Natural killer cell (primary cell): ENCODE measurements at regions of chr6 and their contacts with region 1.

Region 1: DNA sequence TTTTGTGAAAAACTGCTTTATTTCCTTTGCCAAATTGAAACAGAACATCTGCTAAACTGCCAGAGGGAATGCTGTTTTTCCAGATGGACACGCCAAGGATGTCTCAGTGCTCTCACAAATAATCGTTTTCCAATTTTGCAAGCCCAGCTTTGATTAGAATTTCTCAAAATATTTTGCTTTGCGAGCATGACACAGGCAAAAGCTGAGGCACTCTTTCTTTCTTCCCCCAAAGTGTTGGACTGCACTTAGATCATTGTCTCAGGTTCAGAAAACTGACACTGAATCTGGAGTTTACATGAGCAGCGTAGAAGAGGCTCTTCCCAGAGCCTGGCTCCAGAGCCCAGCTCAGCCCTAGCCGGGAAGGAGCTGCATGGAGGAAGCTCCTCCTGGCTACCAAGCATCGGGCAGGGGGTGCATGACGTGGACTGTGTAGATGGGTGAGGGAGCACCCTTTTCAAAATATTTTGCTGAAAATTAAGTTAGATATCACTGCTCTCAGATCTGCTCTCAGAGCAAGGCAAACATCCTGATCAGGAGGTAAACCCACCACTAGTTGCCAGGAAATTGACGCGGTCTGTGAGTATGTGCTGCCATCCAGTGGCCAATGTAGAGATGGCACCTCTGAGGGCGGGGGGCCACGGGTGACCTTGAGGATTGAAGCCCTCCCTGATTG is 107.5 kb downstream of the SLC22A3 start:
- DNase-seq: peak; percentile 66 to 84
- ATAC-seq: peak; percentile 85 to 92 (median 91)
- H3K4me3 ChIP-seq: no peak overlapping the region
- H3K4me3 Mint-ChIP-seq: no peak overlapping the region
- H3K27ac ChIP-seq: peak overlapping the region; percentile 8
- H3K27ac Mint-ChIP-seq: no peak overlapping the region
- H3K4me1 ChIP-seq: peaks cover 48% of the 10 kb centered on the region
- H3K4me1 Mint-ChIP-seq: no peaks in the 10 kb centered on the region
- H3K27me3 ChIP-seq: no peaks in the 10 kb centered on the region
- H3K27me3 Mint-ChIP-seq: no peaks in the 10 kb centered on the region
- CTCF ChIP-seq: peak; percentile 99

Region 2: DNA sequence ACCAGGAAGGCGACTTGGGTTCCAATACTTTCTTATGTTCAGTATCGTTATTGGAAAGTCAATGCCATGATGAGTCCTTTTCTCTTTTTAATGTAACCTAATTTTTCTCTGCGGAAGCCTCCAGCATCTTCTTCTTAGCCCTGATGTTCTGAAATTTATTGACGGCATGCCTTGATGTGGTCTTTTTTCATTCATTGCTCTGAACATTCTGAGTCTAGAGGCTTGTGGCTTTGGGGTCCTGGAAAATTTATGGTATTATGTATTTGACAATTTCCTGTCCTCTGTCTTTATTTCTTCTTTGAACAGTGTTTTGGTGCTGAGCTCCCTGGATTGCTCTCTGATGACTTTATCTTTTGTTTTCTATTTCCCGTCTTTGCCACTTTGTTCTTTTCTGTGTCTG is 593.6 kb before region 1 on chr6:
- intact Hi-C with region 1: loop called (anchors 5 kb)
- DNase-seq: peak in 1 of 2 donors; percentile 57
- ATAC-seq: no peak
- H3K4me3 ChIP-seq: no peak overlapping the region
- H3K4me3 Mint-ChIP-seq: no peak overlapping the region
- H3K27ac ChIP-seq: no peak overlapping the region
- H3K27ac Mint-ChIP-seq: no peak overlapping the region
- H3K4me1 ChIP-seq: no peaks in the 10 kb centered on the region
- H3K4me1 Mint-ChIP-seq: no peaks in the 10 kb centered on the region
- H3K27me3 ChIP-seq: peaks cover 2% of the 10 kb centered on the region
- H3K27me3 Mint-ChIP-seq: peaks cover 23 to 31% of the 10 kb centered on the region in 2 donors
- CTCF ChIP-seq: no peak

Region 3: GRCh38 chr6:160088069-160088783 is 367.5 kb before region 1 on chr6:
- intact Hi-C with region 1: loop called (anchors 5 kb)
- DNase-seq: peak in 1 of 2 donors; percentile 28
- ATAC-seq: no peak
- H3K4me3 ChIP-seq: no peak overlapping the region
- H3K4me3 Mint-ChIP-seq: no peak overlapping the region
- H3K27ac ChIP-seq: no peak overlapping the region
- H3K27ac Mint-ChIP-seq: no peak overlapping the region
- H3K4me1 ChIP-seq: peaks cover 24% of the 10 kb centered on the region
- H3K4me1 Mint-ChIP-seq: peaks cover 22% of the 10 kb centered on the region in 2 donors
- H3K27me3 ChIP-seq: no peaks in the 10 kb centered on the region
- H3K27me3 Mint-ChIP-seq: no peaks in the 10 kb centered on the region
- CTCF ChIP-seq: no peak

Region 4: GRCh38 chr6:160137989-160138835 is 317.5 kb before region 1 on chr6:
- intact Hi-C with region 1: loop called (anchors 1 kb)
- DNase-seq: peak; percentile 47 to 77
- ATAC-seq: peak; percentile 63 to 87 (median 83)
- H3K4me3 ChIP-seq: no peak overlapping the region
- H3K4me3 Mint-ChIP-seq: no peak overlapping the region
- H3K27ac ChIP-seq: no peak overlapping the region
- H3K27ac Mint-ChIP-seq: peak overlapping the region; percentile 21 to 69
- H3K4me1 ChIP-seq: peaks cover 3% of the 10 kb centered on the region
- H3K4me1 Mint-ChIP-seq: peaks cover 8 to 9% of the 10 kb centered on the region in 2 donors
- H3K27me3 ChIP-seq: no peaks in the 10 kb centered on the region
- H3K27me3 Mint-ChIP-seq: no peaks in the 10 kb centered on the region
- CTCF ChIP-seq: peak; percentile 87

Region 5: GRCh38 chr6:160534050-160534696 is 78.5 kb after region 1 on chr6:
- intact Hi-C with region 1: loop called (anchors 1 kb)
- DNase-seq: peak; percentile 56 to 80
- ATAC-seq: peak; percentile 82 to 90 (median 89)
- H3K4me3 ChIP-seq: no peak overlapping the region
- H3K4me3 Mint-ChIP-seq: no peak overlapping the region
- H3K27ac ChIP-seq: no peak overlapping the region
- H3K27ac Mint-ChIP-seq: no peak overlapping the region
- H3K4me1 ChIP-seq: peaks cover 9% of the 10 kb centered on the region
- H3K4me1 Mint-ChIP-seq: no peaks in the 10 kb centered on the region
- H3K27me3 ChIP-seq: no peaks in the 10 kb centered on the region
- H3K27me3 Mint-ChIP-seq: peaks cover 3 to 8% of the 10 kb centered on the region in 2 donors
- CTCF ChIP-seq: peak; percentile 99